BJ (cell line): ENCODE measurements at regions of chr2 and their contacts with region 1.

Region 1: GRCh38 chr2:54665436-54665856 is 58.0 kb upstream of the EML6 start:
- DNase-seq: no peak
- H3K4me3 ChIP-seq: no peak overlapping the region
- H3K27me3 ChIP-seq: no peaks in the 10 kb centered on the region
- CTCF ChIP-seq: peak; percentile 60

Region 2: DNA sequence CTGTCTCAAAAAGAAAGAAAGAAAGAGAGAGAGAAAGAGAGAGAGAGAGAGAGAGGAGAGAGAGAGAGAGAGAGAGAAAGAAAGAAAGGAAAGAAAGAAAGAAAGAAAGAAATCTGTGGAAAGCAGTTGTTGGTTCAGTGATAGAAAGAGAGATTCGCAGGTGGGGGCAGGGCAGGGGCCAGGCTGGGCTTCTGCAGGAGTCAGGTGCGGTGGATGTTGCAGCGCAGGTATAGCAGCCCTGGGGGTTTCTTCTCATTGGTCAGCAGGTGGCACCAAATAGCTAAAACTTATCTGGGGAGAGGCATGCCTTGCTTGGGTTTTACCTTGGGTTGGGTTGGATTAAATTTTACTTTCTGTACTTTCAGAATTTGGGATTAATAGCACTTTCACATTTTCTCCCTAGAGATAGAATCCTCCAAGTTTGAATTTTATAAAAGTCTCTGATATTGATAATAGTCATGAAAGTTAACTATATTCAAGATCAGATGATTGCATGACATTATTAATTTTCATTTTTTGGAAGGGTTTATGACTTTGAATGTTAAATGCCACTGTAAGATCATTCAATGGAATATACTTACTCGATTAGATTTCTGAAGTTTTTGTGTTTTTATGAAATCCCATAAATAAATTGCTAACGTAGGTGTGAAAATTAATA is 142.7 kb before region 1 on chr2:
- CTCF ChIA-PET with region 1: interaction called, 12 read pairs
- POLR2A ChIA-PET with region 1: no interaction called
- DNase-seq: no peak
- H3K4me3 ChIP-seq: no peak overlapping the region
- H3K27me3 ChIP-seq: no peaks in the 10 kb centered on the region
- CTCF ChIP-seq: peak; percentile 59

Region 3: GRCh38 chr2:54589340-54590215 is 75.9 kb before region 1 on chr2:
- CTCF ChIA-PET with region 1: no interaction called
- POLR2A ChIA-PET with region 1: no interaction called
- DNase-seq: no peak
- H3K4me3 ChIP-seq: no peak overlapping the region
- H3K27me3 ChIP-seq: no peaks in the 10 kb centered on the region
- CTCF ChIP-seq: no peak